ENCODE measurements at regions of chr16 and their contacts with region 1.

Region 1: DNA sequence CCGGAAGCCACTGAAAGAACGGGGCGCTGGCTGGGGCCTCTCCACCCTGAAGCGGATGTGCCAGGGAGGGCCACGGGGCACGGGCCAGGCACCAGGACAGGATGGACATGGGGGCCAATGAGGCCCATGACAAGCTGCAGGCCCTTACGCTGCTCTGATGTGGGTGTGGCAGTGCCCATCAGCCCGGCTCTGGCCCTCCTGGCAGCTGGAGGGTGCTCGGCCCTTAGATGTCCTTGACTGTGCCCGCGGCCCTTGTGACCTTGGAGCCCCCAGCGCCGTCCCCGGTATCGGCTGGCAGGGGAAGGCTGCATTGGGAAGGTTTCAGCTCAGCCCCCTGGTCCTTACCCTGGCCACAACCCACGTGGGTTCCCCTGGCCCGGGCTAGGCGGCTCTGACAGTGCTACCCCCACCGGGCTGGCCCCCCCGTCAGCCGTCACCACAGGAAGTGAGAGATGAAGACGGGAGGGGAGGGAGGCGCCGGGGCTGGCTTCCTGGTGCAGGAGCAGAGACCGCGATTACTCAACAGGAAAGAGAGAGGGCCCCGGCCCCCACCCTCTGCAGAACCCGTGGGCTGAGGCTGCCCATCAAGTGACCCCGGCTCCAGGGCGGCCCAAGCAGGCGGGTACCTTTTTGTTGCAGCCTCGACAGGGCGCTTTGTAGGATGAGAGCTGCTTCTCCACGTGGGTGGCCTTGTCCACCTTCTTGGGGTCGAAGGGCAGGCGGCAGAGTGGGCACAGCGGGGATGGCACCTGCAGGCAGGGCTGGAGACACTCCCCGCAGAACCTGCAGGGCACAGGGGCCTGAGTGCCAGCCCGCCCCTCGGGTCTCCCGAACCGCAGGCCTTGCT is 5.3 kb downstream of the RNF166 start:
- DNase-seq: peak; percentile 93 to 98 (median 96)
- H3K4me3 ChIP-seq: peak overlapping the region; percentile 97
- H3K4me3 Mint-ChIP-seq: peak overlapping the region; percentile 94 to 97 (median 96)
- H3K27ac ChIP-seq: peak overlapping the region; percentile 93
- H3K27ac Mint-ChIP-seq: peak overlapping the region; percentile 92 to 100 (median 99)
- H3K4me1 ChIP-seq: peaks cover 78% of the 10 kb centered on the region
- H3K4me1 Mint-ChIP-seq: peaks cover 39 to 64% (median 55%) of the 10 kb centered on the region in 3 donors
- H3K27me3 ChIP-seq: no peaks in the 10 kb centered on the region
- H3K27me3 Mint-ChIP-seq: peaks cover 0 to 4% of the 10 kb centered on the region in 2 donors

Region 2: DNA sequence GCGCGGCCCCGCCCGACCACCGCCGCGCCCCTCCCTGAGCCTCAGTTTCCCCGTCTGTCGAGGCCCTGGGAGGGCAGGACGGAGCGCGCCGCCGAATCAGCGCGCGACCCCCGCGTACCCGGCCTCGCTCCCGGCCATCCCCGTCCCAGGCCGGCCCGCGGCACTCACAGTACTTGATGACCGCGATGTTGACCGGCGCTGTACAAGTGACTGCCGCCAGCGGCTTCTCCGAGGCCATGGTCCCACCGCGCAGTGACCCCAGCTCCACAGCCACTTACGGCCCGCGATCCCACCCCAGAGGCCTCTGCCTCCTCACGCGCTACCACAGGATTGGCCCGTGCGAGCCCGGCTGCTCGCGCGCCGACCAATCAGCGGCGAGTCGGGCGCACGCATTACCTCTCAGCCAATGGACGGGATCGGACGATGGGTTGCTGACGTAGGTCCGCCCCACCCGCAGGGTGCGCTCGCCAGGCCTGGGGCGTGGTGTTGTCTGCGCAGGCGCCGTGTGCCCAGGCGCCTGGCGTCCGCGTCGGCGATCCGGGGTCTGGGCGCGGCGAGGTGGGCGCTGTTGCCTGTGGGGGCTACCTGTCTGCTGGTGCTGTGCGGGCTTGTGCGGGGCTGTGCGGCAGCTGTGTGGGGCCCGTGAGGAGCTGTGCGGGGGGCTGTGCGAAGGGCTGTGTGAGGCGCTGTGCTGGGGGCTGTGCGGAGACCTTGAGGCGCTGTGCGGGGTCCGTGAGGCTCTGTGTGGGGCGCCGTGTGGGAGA is 37.8 kb before region 1 on chr16 and contains the start of gene MVD:
- CTCF ChIA-PET with region 1: interaction called, 5 read pairs
- POLR2A ChIA-PET with region 1: interaction called, 13 read pairs
- DNase-seq: peak; percentile 94 to 98 (median 95)
- H3K4me3 ChIP-seq: peak within 1 kb of the TSS; percentile 78
- H3K4me3 Mint-ChIP-seq: peak within 1 kb of the TSS; percentile 92 to 97 (median 94)
- H3K27ac ChIP-seq: peak within 1 kb of the TSS; percentile 91
- H3K27ac Mint-ChIP-seq: peak within 1 kb of the TSS; percentile 92 to 99 (median 96)
- H3K4me1 ChIP-seq: peaks cover 14% of the 10 kb centered on the region
- H3K4me1 Mint-ChIP-seq: peaks cover 18 to 28% (median 20%) of the 10 kb centered on the region in 3 donors
- H3K27me3 ChIP-seq: no peaks in the 10 kb centered on the region
- H3K27me3 Mint-ChIP-seq: no peaks in the 10 kb centered on the region
- total RNA-seq, gene MVD: 58.0 to 59.7 TPM

Region 3: DNA sequence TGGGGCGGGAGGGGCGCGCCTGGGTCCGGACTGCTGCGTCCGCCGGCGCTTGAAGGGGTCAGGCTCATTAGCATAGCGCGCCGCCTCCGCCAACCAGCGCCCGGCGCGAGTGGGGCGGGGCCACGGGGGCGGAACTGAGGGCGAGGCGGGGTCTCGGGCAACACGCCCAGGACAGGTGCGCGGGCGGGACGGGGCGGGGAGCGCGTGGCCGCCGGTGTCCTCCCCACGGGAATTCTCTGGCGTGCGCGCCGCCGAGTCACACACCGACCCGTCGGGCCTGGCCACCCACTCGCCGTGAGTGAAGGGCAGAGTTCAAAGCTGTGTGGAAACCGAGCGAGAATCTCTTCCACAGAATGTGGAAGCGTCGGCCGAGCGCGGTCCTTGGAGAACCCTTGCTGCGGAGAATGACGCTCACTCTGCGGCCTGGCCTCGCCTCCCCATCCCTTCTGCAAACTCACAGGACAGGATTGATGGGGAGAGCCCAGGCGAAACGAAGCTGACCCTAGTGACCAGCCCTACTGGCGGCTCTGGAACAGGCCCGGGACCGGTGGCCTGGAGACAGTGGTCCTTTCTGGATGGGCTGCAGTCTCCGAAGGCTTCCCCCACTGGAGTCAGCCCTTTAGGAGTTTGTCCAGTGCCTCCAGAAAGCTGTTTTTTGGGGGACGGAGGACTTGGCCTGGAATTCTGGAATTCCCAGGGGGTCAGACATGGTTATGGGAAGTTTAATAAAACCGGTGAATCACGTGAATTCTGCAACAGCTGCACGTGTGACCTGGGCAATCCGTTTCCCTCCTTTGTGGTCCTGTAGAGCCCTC is 14.2 kb before region 1 on chr16 and contains the start of gene SNAI3:
- CTCF ChIA-PET with region 1: interaction called, 29 read pairs
- POLR2A ChIA-PET with region 1: interaction called, 9 read pairs
- DNase-seq: peak; percentile 76 to 89 (median 83)
- H3K4me3 ChIP-seq: peak within 1 kb of the TSS; percentile 81
- H3K4me3 Mint-ChIP-seq: peak within 1 kb of the TSS; percentile 80 to 94 (median 84)
- H3K27ac ChIP-seq: peak within 1 kb of the TSS; percentile 70
- H3K27ac Mint-ChIP-seq: peak within 1 kb of the TSS; percentile 31 to 98 (median 75)
- H3K4me1 ChIP-seq: peaks cover 60% of the 10 kb centered on the region
- H3K4me1 Mint-ChIP-seq: peaks cover 31 to 69% (median 35%) of the 10 kb centered on the region in 3 donors
- H3K27me3 ChIP-seq: no peaks in the 10 kb centered on the region
- H3K27me3 Mint-ChIP-seq: no peaks in the 10 kb centered on the region
- total RNA-seq, gene SNAI3: 2.2 to 2.8 TPM

Measured in CD8-positive, alpha-beta memory T cell (primary cell).